ENCODE measurements at regions of chr5 and their contacts with region 1.

Region 1: GRCh38 chr5:55534436-55535198 is at the start of gene PLPP1:
- DNase-seq: peak; percentile 79 to 89
- H3K4me3 ChIP-seq: peak within 1 kb of the TSS; percentile 84 to 95 (median 94)
- H3K27ac ChIP-seq: peak within 1 kb of the TSS; percentile 96 to 97
- H3K4me1 ChIP-seq: no peaks in the 10 kb centered on the region
- H3K27me3 ChIP-seq: no peaks in the 10 kb centered on the region
- CTCF ChIP-seq: no peak
- POLR2A ChIP-seq: peak; percentile 55
- total RNA-seq, gene PLPP1: 177 to 339 (median 237) TPM

Region 2: DNA sequence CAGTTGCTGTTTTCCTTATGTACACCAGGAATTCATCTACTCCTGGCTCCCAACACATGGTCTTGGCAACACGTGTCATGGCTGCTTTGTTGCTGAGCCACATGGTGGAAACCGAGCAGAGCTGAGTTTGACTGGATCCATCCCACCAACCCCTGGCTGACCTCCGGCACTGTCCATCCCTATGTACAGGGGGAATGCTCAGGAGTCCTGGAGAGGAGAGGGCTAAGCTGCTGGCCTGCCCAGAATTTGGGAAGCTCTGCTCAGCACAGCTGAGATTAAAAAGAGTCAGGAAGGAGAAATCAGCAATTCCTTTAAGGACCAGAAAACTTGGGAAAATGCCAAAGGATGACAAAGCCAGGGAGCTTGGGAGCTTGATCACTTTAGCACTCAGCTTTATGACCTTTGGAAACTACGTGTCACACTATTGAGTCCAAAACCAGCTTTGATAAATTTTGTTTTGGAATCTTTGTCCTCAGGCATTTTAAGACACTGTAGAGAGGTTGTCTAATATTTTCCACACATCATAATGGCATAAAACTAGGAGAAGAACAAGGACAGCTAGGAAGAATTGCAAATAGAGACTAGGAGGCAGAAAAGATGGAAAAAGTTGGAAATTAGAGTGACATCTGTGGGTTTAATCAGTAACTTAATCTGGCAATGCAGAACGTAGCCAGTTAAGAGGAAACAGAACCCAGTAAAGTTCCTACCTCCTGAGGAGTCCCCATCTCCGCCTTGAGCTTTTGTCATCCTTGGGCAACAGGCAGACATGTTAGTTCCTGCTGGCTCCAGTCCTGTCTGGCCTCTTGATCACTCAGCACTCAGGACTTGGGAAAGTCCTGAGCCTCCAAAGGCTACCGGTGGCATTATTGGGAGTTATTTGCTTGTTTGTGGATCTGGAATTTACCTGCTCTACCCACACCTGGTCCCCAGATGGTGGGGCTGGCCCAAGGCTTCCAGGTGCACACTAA is 62.7 kb after region 1 on chr5:
- intact Hi-C with region 1: loop called (anchors 10 kb)
- DNase-seq: no peak
- H3K4me3 ChIP-seq: no peak overlapping the region
- H3K27ac ChIP-seq: peak overlapping the region; percentile 61 to 82
- H3K4me1 ChIP-seq: peaks cover 14 to 19% of the 10 kb centered on the region in 2 donors
- H3K27me3 ChIP-seq: no peaks in the 10 kb centered on the region
- CTCF ChIP-seq: no peak
- POLR2A ChIP-seq: no peak

Region 3: DNA sequence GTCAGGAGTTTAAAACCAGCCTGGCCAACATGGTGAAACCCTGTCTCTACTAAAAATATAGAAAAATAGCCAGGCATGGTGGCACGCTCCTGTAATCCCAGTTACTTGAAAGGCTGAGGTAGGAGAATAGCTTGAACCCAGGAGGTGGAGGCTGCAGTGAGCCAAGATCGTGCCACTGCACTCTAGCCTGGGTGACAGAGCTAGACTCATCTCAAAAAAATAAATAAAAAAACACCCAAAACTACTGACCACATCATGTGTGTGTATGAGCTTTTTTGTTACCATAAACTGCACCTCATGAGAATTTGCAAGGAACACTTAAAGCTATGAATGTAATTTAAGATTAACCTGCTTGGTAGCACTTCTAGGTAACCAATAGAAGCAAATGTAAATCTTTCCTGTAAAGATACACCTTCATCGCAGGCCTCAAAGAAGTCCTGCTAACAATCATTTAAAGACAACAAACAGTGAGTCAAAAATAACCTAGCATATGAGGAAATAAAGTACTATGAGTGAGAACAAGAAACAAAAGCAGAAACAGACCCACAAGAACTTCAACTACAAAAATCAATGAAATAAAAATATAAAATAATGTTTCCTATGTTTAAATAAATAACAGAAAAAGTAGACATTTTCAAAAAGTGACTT is 164.5 kb after region 1 on chr5:
- intact Hi-C with region 1: no loop called
- DNase-seq: no peak
- H3K4me3 ChIP-seq: no peak overlapping the region
- H3K27ac ChIP-seq: no peak overlapping the region
- H3K4me1 ChIP-seq: no peaks in the 10 kb centered on the region
- H3K27me3 ChIP-seq: no peaks in the 10 kb centered on the region
- CTCF ChIP-seq: no peak
- POLR2A ChIP-seq: no peak

Measured in breast epithelium (tissue), 4 donors.